Heart left ventricle (tissue), 16 donors: ENCODE measurements at regions of chr6 and their contacts with region 1.

Region 1: DNA sequence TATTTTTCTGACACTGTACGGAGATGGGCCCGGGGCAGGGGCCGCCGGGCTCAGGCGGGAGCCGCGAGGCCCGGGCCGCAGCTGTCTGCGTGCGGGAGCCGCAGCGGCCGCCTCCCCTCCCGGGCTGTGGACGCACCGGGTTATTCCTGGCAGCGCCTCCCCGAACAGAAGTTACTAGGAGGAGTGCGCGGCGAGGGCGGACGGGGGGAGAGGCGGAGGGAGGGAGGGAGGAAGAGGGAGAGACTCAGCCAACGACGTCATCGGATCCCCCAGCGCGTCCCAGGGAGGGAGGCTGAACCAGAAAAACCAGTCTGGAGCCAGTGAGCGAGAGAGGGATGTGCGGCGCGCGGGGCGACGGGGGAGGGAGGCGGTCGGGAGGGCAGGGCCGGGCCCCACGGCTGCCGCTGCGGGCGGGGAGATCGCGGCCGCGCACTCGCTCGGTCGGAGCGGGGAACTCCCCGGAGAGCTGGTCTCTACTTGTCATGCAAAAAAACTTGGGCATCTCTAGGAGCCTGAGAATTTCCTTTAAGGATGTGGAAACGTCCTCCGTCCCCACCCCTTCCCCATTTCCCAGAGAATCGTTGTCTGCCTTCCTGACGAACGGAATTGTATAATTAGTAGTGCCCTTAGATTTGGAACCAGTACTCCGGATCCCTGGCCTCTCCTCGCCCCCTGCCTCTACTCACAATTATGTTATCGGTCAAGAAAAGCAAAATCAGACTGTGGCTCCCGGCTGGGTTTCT is 1.4 kb upstream of the HIVEP2 start:
- DNase-seq: peak; percentile 98 to 100 (median 99)
- ATAC-seq: peak; percentile 85 to 90 (median 88)
- H3K4me3 ChIP-seq: peak overlapping the region; percentile 72 to 99 (median 93)
- H3K27ac ChIP-seq: peak overlapping the region; percentile 94 to 100 (median 99)
- H3K4me1 ChIP-seq: peaks cover 0 to 42% (median 15%) of the 10 kb centered on the region in 12 donors
- H3K27me3 ChIP-seq: no peaks in the 10 kb centered on the region
- CTCF ChIP-seq: no peak
- POLR2A ChIP-seq: peak in 1 of 2 donors; percentile 94

Region 2: GRCh38 chr6:142746524-142746923 is 199.8 kb before region 1 on chr6:
- intact Hi-C with region 1: loop called in 4 of 10 experiments (anchors 5 to 10 kb)
- DNase-seq: peak in 1 of 5 donors; percentile 25
- ATAC-seq: peak in 2 of 4 donors; percentile 53 to 56
- H3K4me3 ChIP-seq: no peak overlapping the region
- H3K27ac ChIP-seq: no peak overlapping the region
- H3K4me1 ChIP-seq: no peaks in the 10 kb centered on the region
- H3K27me3 ChIP-seq: no peaks in the 10 kb centered on the region
- CTCF ChIP-seq: peak; percentile 23 to 59 (median 45)
- POLR2A ChIP-seq: no peak

Region 3: GRCh38 chr6:142819603-142820337 is 126.6 kb before region 1 on chr6:
- intact Hi-C with region 1: loop called in 3 of 10 experiments (anchors 2 to 5 kb)
- DNase-seq: no peak
- ATAC-seq: peak; percentile 22 to 75 (median 38)
- H3K4me3 ChIP-seq: peak overlapping the region in 11 of 12 donors; percentile 6 to 56 (median 44)
- H3K27ac ChIP-seq: peak overlapping the region; percentile 38 to 86 (median 75)
- H3K4me1 ChIP-seq: peaks cover 4 to 73% (median 50%) of the 10 kb centered on the region in 12 donors
- H3K27me3 ChIP-seq: no peaks in the 10 kb centered on the region
- CTCF ChIP-seq: no peak
- POLR2A ChIP-seq: no peak

Region 4: GRCh38 chr6:142871910-142872331 is 74.4 kb before region 1 on chr6:
- intact Hi-C with region 1: loop called in 1 of 10 experiments (anchors 2 kb)
- DNase-seq: peak in 3 of 5 donors; percentile 47 to 51 (median 48)
- ATAC-seq: peak; percentile 84 to 91 (median 91)
- H3K4me3 ChIP-seq: peak overlapping the region in 1 of 12 donors; percentile 6
- H3K27ac ChIP-seq: peak overlapping the region; percentile 37 to 84 (median 62)
- H3K4me1 ChIP-seq: peaks cover 7 to 81% (median 56%) of the 10 kb centered on the region in 12 donors
- H3K27me3 ChIP-seq: no peaks in the 10 kb centered on the region
- CTCF ChIP-seq: no peak
- POLR2A ChIP-seq: no peak

Region 5: DNA sequence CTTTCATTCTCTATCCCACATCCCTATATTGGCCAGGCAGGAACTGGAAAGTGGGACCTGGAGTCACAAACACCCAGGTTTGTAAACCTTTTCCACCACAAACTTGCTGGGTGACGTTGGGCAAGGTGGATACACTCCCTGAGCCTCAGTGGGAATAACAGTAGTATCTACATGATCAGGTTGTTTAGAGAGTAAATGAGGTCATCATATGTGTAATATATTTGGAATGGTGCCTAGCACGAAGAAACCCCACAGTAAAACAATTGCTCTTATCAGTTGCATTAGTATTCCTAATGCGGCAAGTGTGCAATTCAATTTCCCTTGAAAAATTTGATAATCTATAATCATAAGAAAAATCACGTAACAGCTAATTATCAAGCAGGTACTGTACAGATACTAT is 53.3 kb before region 1 on chr6:
- intact Hi-C with region 1: loop called in 3 of 10 experiments (anchors 5 to 10 kb)
- DNase-seq: no peak
- ATAC-seq: peak in 2 of 4 donors; percentile 14 to 32
- H3K4me3 ChIP-seq: peak overlapping the region in 2 of 12 donors; percentile 8 to 21
- H3K27ac ChIP-seq: no peak overlapping the region
- H3K4me1 ChIP-seq: peaks cover 0 to 20% (median 12%) of the 10 kb centered on the region in 12 donors
- H3K27me3 ChIP-seq: no peaks in the 10 kb centered on the region
- CTCF ChIP-seq: no peak
- POLR2A ChIP-seq: no peak

Region 6: GRCh38 chr6:143000811-143001210 is 54.5 kb after region 1 on chr6:
- intact Hi-C with region 1: no loop called
- DNase-seq: no peak
- ATAC-seq: no peak
- H3K4me3 ChIP-seq: no peak overlapping the region
- H3K27ac ChIP-seq: no peak overlapping the region
- H3K4me1 ChIP-seq: no peaks in the 10 kb centered on the region
- H3K27me3 ChIP-seq: no peaks in the 10 kb centered on the region
- CTCF ChIP-seq: no peak
- POLR2A ChIP-seq: no peak

Region 7: GRCh38 chr6:143026696-143027449 is 80.5 kb after region 1 on chr6:
- intact Hi-C with region 1: loop called in 1 of 10 experiments (anchors 5 kb)
- DNase-seq: peak in 4 of 5 donors; percentile 23 to 38 (median 36)
- ATAC-seq: peak in 3 of 4 donors; percentile 65 to 78 (median 68)
- H3K4me3 ChIP-seq: no peak overlapping the region
- H3K27ac ChIP-seq: no peak overlapping the region
- H3K4me1 ChIP-seq: no peaks in the 10 kb centered on the region
- H3K27me3 ChIP-seq: no peaks in the 10 kb centered on the region
- CTCF ChIP-seq: peak; percentile 55 to 76 (median 66)
- POLR2A ChIP-seq: no peak

Region 8: GRCh38 chr6:143223895-143224294 is 277.5 kb after region 1 on chr6:
- intact Hi-C with region 1: loop called in 1 of 10 experiments (anchors 5 kb)
- DNase-seq: peak in 4 of 5 donors; percentile 65 to 78 (median 71)
- ATAC-seq: peak; percentile 48 to 91 (median 74)
- H3K4me3 ChIP-seq: no peak overlapping the region
- H3K27ac ChIP-seq: peak overlapping the region; percentile 6 to 82 (median 71)
- H3K4me1 ChIP-seq: peaks cover 0 to 40% (median 23%) of the 10 kb centered on the region in 12 donors
- H3K27me3 ChIP-seq: no peaks in the 10 kb centered on the region
- CTCF ChIP-seq: no peak
- POLR2A ChIP-seq: no peak

Region 9: GRCh38 chr6:144095331-144096002 is 1149.1 kb after region 1 on chr6 and contains the start of gene SF3B5:
- intact Hi-C with region 1: no loop called
- DNase-seq: peak; percentile 98 to 99 (median 99)
- ATAC-seq: peak; percentile 100
- H3K4me3 ChIP-seq: peak within 1 kb of the TSS; percentile 49 to 95 (median 89)
- H3K27ac ChIP-seq: peak within 1 kb of the TSS in 11 of 12 donors; percentile 68 to 87 (median 83)
- H3K4me1 ChIP-seq: peaks cover 0 to 28% (median 14%) of the 10 kb centered on the region in 12 donors
- H3K27me3 ChIP-seq: no peaks in the 10 kb centered on the region
- CTCF ChIP-seq: no peak
- POLR2A ChIP-seq: peak in 1 of 2 donors; percentile 62
- total RNA-seq, gene SF3B5: 99.5 to 240 (median 124) TPM